PC-3 (cell line): ENCODE measurements at regions of chr14 and their contacts with region 1.

Region 1: DNA sequence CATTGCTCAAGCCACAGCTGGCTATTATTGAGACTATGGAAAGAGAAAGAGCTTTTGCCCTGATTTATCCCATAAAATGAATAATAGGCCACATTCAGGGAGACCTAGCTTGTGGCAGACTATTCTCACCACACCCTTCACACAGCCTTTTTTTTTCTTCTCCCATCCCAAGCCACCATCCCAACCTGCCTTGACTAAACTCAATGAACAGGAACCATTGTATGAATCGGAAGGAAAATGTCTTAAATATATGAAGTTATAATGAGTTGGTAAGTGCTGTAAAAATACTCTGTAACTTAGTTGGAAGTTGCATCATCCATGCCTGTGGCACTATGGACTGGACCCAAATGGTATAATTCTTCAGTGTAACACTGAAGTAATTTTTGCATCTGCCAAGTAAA is 338.4 kb downstream of the RAD51B start:
- DNase-seq: peak; percentile 61
- ATAC-seq: peak; percentile 78
- H3K4me3 ChIP-seq: no peak overlapping the region
- H3K27ac ChIP-seq: peak overlapping the region; percentile 66
- H3K4me1 ChIP-seq: peaks cover 17% of the 10 kb centered on the region
- H3K27me3 ChIP-seq: no peaks in the 10 kb centered on the region
- CTCF ChIP-seq: no peak

Region 2: DNA sequence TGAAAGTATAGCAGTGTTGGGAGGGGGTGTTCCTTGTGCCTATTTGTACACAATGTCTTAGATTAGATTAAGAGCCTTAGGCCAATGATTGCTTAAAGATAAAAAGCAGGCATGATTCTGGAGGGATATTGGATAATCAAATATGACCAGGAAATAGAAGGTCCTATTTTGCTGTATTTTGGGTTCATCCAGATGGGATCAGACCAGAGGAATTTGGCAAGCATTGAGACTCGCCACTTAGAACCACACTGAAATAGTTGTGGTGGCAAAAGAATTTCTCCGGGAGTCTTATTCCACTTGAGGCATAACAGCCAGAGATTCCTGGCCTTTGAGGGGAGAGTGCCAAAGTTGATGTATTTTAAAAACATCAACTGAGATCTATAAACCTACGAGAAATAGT is 11.2 kb before region 1 on chr14:
- CTCF ChIA-PET with region 1: no interaction called
- POLR2A ChIA-PET with region 1: interaction called, 5 read pairs
- intact Hi-C with region 1: loop called (anchors 1 kb)
- DNase-seq: peak; percentile 91
- ATAC-seq: peak; percentile 85
- H3K4me3 ChIP-seq: no peak overlapping the region
- H3K27ac ChIP-seq: peak overlapping the region; percentile 51
- H3K4me1 ChIP-seq: peaks cover 47% of the 10 kb centered on the region
- H3K27me3 ChIP-seq: no peaks in the 10 kb centered on the region
- CTCF ChIP-seq: no peak